K562 (cell line): ENCODE measurements at regions of chr17 and their contacts with region 1.

Region 1: GRCh38 chr17:50783193-50783660 is 15.9 kb upstream of the ANKRD40CL start:
- DNase-seq: peak; percentile 89 to 93 (median 92)
- ATAC-seq: peak; percentile 98
- H3K4me3 ChIP-seq: no peak overlapping the region
- H3K27ac ChIP-seq: no peak overlapping the region
- H3K4me1 ChIP-seq: peaks cover 0 to 4% of the 10 kb centered on the region in 2 experiments; a peak in 1 of 5 replicates
- H3K27me3 ChIP-seq: no peaks in the 10 kb centered on the region
- CTCF ChIP-seq: peak; percentile 98 to 99 (median 99)
- EP300 ChIP-seq: no peak
- POLR2A ChIP-seq: no peak
- RAD21 ChIP-seq: peak; percentile 94 to 98

Region 2: GRCh38 chr17:50841949-50842354 is 58.7 kb after region 1 on chr17:
- CTCF ChIA-PET with region 1: interaction called, 72 read pairs
- POLR2A ChIA-PET with region 1: interaction called, 4 read pairs
- in situ Hi-C with region 1: loop called (anchors 5 kb)
- intact Hi-C with region 1: loop called (anchors 1 kb)
- DNase-seq: peak; percentile 77 to 84 (median 83)
- ATAC-seq: peak; percentile 93
- H3K4me3 ChIP-seq: no peak overlapping the region
- H3K27ac ChIP-seq: no peak overlapping the region
- H3K4me1 ChIP-seq: peaks cover 0 to 13% of the 10 kb centered on the region in 2 experiments; a peak in 2 of 5 replicates
- H3K27me3 ChIP-seq: no peaks in the 10 kb centered on the region
- CTCF ChIP-seq: peak; percentile 84 to 90 (median 87)
- EP300 ChIP-seq: no peak
- POLR2A ChIP-seq: no peak
- RAD21 ChIP-seq: peak; percentile 85 to 94

Region 3: GRCh38 chr17:50949989-50950881 is 167.0 kb after region 1 on chr17:
- CTCF ChIA-PET with region 1: interaction called, 10 read pairs
- POLR2A ChIA-PET with region 1: no interaction called
- in situ Hi-C with region 1: loop called (anchors 5 kb)
- intact Hi-C with region 1: loop called (anchors 1 kb)
- DNase-seq: peak; percentile 80 to 89 (median 84)
- ATAC-seq: peak; percentile 93
- H3K4me3 ChIP-seq: peak overlapping the region; percentile 9
- H3K27ac ChIP-seq: peak overlapping the region; percentile 73
- H3K4me1 ChIP-seq: peaks cover 46 to 74% of the 10 kb centered on the region in 2 experiments
- H3K27me3 ChIP-seq: no peaks in the 10 kb centered on the region
- CTCF ChIP-seq: peak; percentile 88 to 93 (median 92)
- EP300 ChIP-seq: no peak
- POLR2A ChIP-seq: no peak
- RAD21 ChIP-seq: peak; percentile 97 to 99

Region 4: DNA sequence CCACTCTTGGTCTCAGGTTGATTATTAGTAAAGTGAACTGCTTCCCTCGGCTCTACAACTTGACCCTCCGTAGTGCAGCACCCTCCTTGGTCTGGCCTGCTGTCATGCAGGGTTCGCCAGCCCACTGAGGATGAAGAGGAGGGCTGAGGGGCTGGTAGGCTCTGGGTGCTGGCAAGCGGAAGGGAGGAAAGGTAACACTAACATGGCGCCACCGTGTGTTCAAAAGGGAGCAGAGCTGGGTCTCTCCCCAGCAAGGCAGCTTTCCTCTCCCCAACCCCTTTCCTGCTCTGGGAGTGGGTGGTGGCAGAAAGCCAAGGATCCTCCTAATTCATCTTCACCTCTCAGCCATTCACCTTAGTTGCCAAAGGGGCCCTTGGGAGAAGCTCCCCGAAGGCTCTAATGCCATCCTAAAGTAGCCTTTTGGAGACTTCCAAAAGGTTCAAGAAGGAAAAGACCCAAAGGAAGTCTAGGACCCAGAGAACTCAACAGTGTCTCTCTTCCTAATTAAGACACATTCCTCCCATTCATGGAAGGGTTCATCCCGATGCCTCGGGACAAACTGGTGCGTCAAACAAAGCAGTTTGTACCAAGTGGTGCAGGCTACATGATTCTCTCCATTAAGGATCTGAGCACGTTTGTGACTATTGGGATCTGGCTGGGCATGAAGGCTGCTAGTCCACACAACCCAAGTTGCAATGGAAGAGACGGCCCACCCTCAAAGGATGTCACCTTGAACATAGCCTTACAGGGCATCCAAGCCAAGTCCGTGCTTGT is 173.7 kb after region 1 on chr17:
- CTCF ChIA-PET with region 1: interaction called, 16 read pairs
- POLR2A ChIA-PET with region 1: no interaction called
- in situ Hi-C with region 1: loop called (anchors 5 kb)
- intact Hi-C with region 1: no loop called
- DNase-seq: peak; percentile 73 to 78 (median 76)
- ATAC-seq: peak; percentile 95
- H3K4me3 ChIP-seq: no peak overlapping the region
- H3K27ac ChIP-seq: no peak overlapping the region
- H3K4me1 ChIP-seq: peaks cover 0 to 14% of the 10 kb centered on the region in 2 experiments; a peak in 3 of 5 replicates
- H3K27me3 ChIP-seq: no peaks in the 10 kb centered on the region
- CTCF ChIP-seq: peak; percentile 78 to 92 (median 79)
- EP300 ChIP-seq: no peak
- POLR2A ChIP-seq: no peak
- RAD21 ChIP-seq: peak; percentile 68 to 76